ENCODE measurements at regions of chr2 and their contacts with region 1.

Region 1: DNA sequence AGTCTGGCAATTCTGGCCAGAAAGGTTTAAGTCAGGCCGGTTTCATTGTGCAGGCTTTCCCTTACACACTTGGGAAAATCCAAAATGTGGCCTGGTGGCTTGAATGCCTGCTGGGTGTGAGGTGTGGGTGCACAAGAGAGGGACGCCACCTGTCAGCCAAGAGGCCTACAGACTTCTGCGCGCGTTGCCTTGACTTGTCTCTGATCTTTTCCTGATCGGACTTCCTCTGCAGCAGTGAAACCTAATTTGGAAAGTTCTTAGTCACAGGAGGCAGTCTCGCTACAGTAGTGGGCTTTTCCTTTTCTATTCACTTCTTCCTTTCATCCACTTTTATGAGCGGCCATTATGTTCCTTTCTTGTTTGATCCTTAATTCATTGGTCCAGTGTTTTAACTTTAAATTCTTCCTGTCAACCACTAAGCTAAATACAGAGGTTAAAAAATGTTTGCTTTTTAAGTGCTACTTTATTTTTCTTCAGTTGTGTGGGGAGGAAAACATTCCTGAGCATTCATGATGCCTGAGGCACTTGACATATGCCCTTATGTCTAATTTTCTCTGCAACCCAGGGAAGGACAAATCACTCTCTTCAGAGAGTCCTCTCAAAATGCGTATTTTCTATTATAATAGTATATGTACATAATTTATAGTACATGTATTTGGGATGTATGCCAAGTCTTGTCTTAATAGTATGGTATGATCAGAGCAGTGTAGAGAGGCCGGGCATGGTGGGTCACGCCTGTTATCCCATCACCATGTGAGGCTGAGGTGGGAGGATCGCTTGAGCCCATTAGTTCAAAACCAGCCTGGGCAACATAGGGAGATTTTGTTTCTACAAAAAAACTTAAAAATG is 128.9 kb downstream of the WDSUB1 start:
- DNase-seq: no peak
- H3K4me3 ChIP-seq: no peak overlapping the region
- H3K27ac ChIP-seq: no peak overlapping the region
- H3K4me1 ChIP-seq: peaks cover 7% of the 10 kb centered on the region
- H3K27me3 ChIP-seq: no peaks in the 10 kb centered on the region
- CTCF ChIP-seq: no peak

Region 2: GRCh38 chr2:159144776-159145614 is 12.6 kb before region 1 on chr2:
- intact Hi-C with region 1: loop called (anchors 2 kb)
- DNase-seq: no peak
- H3K4me3 ChIP-seq: no peak overlapping the region
- H3K27ac ChIP-seq: no peak overlapping the region
- H3K4me1 ChIP-seq: peaks cover 7% of the 10 kb centered on the region
- H3K27me3 ChIP-seq: no peaks in the 10 kb centered on the region
- CTCF ChIP-seq: no peak

Region 3: GRCh38 chr2:159968279-159968900 is 810.8 kb after region 1 on chr2:
- intact Hi-C with region 1: no loop called
- DNase-seq: peak; percentile 25
- H3K4me3 ChIP-seq: no peak overlapping the region
- H3K27ac ChIP-seq: no peak overlapping the region
- H3K4me1 ChIP-seq: no peaks in the 10 kb centered on the region
- H3K27me3 ChIP-seq: no peaks in the 10 kb centered on the region
- CTCF ChIP-seq: no peak

Measured in colonic mucosa (tissue), 4 donors.